Gastrocnemius medialis (tissue), 4 donors: ENCODE measurements at regions of chr12 and their contacts with region 1.

Region 1: GRCh38 chr12:89451841-89452251 is 72.8 kb downstream of the GALNT4 start:
- DNase-seq: no peak
- ATAC-seq: peak in 1 of 2 donors; percentile 30
- H3K4me3 ChIP-seq: no peak overlapping the region
- H3K27ac ChIP-seq: peak overlapping the region in 3 of 4 donors; percentile 19 to 32 (median 20)
- H3K4me1 ChIP-seq: peaks cover 29 to 33% of the 10 kb centered on the region in 2 donors
- H3K27me3 ChIP-seq: no peaks in the 10 kb centered on the region
- CTCF ChIP-seq: no peak
- POLR2A ChIP-seq: no peak

Region 2: GRCh38 chr12:89019408-89020120 is 432.3 kb before region 1 on chr12:
- in situ Hi-C with region 1: loop called in 3 of 4 experiments (anchors 5 to 25 kb)
- intact Hi-C with region 1: no loop called
- DNase-seq: peak; percentile 55 to 59
- ATAC-seq: peak; percentile 90 to 92
- H3K4me3 ChIP-seq: peak overlapping the region; percentile 21 to 42 (median 36)
- H3K27ac ChIP-seq: no peak overlapping the region
- H3K4me1 ChIP-seq: peaks cover 0 to 6% of the 10 kb centered on the region in 2 donors
- H3K27me3 ChIP-seq: no peaks in the 10 kb centered on the region
- CTCF ChIP-seq: peak; percentile 48 to 83 (median 77)
- POLR2A ChIP-seq: no peak

Region 3: DNA sequence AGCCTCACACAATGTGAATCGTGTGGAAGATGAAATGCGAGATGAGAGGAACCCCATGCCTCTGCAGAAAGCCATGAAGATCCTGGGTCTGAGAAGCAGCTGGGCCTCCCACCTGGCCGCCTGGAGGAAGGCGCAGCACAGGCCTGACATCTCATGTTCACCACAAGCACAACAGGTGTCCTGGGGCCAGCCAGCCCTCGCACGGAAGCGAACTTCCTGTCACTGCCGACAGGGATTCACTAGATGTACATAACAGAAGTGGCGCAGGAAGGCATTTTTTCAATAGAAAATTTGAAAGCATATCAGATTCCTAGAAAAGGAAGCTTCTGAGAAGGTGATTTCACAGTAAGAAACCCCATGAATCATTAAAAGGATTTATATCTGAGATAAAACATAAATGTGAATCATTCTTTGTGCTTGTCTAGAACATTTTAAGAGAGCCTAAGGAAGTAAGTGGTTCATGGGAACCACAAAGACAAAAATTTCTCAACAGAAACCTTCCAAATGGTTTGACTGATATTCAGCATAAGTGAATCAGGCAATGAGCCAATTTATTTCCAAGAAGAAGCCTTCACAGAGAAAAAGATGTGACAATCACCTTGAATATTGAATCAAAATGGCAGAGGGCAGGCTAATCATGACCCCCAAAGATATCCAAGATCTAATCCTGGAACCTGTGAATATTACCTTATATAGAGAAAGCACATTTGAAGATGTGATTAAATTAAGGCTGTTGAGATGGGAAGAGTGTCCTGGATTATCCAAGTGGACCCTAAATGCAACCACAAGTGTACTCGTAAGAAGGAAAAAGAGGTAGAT is 411.5 kb before region 1 on chr12:
- in situ Hi-C with region 1: loop called in 1 of 4 experiments (anchors 10 kb)
- intact Hi-C with region 1: no loop called
- DNase-seq: no peak
- ATAC-seq: no peak
- H3K4me3 ChIP-seq: no peak overlapping the region
- H3K27ac ChIP-seq: no peak overlapping the region
- H3K4me1 ChIP-seq: no peaks in the 10 kb centered on the region
- H3K27me3 ChIP-seq: no peaks in the 10 kb centered on the region
- CTCF ChIP-seq: no peak
- POLR2A ChIP-seq: no peak

Region 4: DNA sequence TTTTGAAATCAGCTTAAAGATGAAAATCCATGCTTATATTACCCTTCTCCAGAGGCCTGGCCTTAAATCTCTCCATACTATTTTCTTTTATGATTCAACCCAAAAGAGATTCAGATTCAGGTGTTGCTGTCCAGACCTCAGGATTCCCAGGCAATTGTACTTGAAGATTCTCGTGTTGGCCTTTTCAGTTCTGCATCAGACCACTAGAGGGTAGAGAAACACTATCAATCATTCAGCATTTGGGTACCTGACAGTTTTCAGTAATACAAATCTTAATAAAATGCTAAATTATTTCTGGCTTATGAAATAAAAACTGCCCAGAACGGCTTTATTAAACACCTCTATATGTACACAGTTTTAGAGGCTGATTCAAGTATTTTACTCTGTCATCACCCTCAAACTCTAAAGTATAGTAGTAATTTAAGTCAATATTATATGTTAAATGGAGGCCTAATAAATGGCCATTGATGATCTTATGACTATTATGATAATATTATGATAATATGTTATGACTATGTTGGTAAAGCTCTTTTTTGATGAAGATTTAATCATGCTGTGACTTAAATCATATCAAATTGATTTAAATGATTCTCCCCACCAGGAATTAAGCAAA is 400.7 kb before region 1 on chr12:
- in situ Hi-C with region 1: loop called in 2 of 4 experiments (anchors 10 kb)
- intact Hi-C with region 1: no loop called
- DNase-seq: no peak
- ATAC-seq: no peak
- H3K4me3 ChIP-seq: no peak overlapping the region
- H3K27ac ChIP-seq: no peak overlapping the region
- H3K4me1 ChIP-seq: no peaks in the 10 kb centered on the region
- H3K27me3 ChIP-seq: no peaks in the 10 kb centered on the region
- CTCF ChIP-seq: peak; percentile 54 to 88 (median 74)
- POLR2A ChIP-seq: no peak

Region 5: GRCh38 chr12:89352492-89353187 is 99.2 kb before region 1 on chr12 and contains the start of gene DUSP6:
- in situ Hi-C with region 1: no loop called
- intact Hi-C with region 1: loop called (anchors 2 kb)
- DNase-seq: peak; percentile 75 to 80
- ATAC-seq: peak; percentile 66 to 67
- H3K4me3 ChIP-seq: peak within 1 kb of the TSS; percentile 71 to 77 (median 74)
- H3K27ac ChIP-seq: peak within 1 kb of the TSS; percentile 78 to 85 (median 82)
- H3K4me1 ChIP-seq: peaks cover 4 to 32% of the 10 kb centered on the region in 2 donors
- H3K27me3 ChIP-seq: peaks cover 50 to 88% (median 77%) of the 10 kb centered on the region in 3 donors
- CTCF ChIP-seq: no peak
- POLR2A ChIP-seq: peak; percentile 37 to 54
- total RNA-seq, gene DUSP6: 4.2 to 23.8 (median 12.1) TPM

Region 6: DNA sequence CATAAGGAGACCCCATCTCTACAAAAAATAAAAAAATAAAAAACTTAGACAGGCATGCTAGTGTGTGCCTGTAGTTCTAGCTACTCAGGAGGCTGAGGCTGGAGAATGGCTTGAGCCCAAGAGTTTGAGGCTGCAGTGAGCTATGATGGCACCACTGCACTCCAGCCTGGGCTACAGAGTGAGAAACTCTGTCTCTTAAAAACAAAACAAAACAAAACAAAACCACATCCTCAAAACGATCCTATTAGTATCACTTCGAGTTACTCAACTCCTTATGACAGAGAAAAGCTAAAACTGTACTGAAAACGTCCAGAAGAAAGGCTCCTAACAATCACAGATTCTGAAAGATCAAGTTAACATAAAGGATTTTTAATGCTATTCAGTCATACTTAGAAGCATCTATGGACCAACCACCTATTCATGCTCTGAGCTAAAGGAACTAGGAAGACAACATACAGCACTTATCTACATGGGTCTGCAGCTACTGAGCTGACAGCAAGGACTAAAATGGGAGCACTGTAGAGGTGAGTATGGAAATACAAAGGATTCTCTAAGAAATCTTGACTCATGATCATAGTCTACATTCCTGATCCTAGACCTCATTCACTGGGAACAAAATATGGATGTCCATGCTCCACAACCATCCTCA is 24.2 kb before region 1 on chr12:
- in situ Hi-C with region 1: no loop called
- intact Hi-C with region 1: no loop called
- DNase-seq: no peak
- ATAC-seq: no peak
- H3K4me3 ChIP-seq: no peak overlapping the region
- H3K27ac ChIP-seq: no peak overlapping the region
- H3K4me1 ChIP-seq: no peaks in the 10 kb centered on the region
- H3K27me3 ChIP-seq: no peaks in the 10 kb centered on the region
- CTCF ChIP-seq: no peak
- POLR2A ChIP-seq: no peak